Activated CD4-positive, alpha-beta T cell treated with anti-CD3 and anti-CD28 coated beads, Interleukin-2, amount 10 ng/mL, durations not matched to agents 24 days and 14 days (primary cell): ENCODE measurements at regions of chr3 and their contacts with region 1.

Region 1: GRCh38 chr3:124639406-124640237 is 90.6 kb upstream of the UMPS start:
- DNase-seq: peak; percentile 78
- H3K4me3 Mint-ChIP-seq: peak overlapping the region; percentile 74
- H3K27ac Mint-ChIP-seq: peak overlapping the region; percentile 76
- H3K4me1 Mint-ChIP-seq: peaks cover 41% of the 10 kb centered on the region
- H3K27me3 Mint-ChIP-seq: peaks cover 43% of the 10 kb centered on the region

Region 2: GRCh38 chr3:124592621-124593441 is 46.8 kb before region 1 on chr3:
- intact Hi-C with region 1: loop called (anchors 1 kb)
- DNase-seq: no peak
- H3K4me3 Mint-ChIP-seq: no peak overlapping the region
- H3K27ac Mint-ChIP-seq: no peak overlapping the region
- H3K4me1 Mint-ChIP-seq: peaks cover 14% of the 10 kb centered on the region
- H3K27me3 Mint-ChIP-seq: peaks cover 35% of the 10 kb centered on the region

Region 3: DNA sequence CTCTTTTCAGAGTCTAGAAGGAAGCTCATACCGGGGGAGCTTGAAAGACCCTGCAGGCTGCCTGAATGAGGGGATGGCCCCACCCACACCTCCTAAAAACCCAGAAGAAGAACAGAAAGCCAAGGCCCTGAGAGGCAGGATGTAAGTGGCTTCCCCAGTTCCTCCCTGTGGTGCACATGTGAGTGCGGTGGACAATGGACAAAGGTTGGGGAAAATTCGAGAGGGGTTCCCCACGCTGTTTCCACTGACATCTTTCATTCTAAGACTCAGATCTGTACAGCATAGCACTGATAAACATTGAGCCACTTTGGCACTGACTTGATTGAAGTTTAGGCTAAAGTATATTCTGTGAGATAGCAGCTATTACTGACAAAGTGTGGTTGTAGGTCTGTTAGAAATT is 11.2 kb after region 1 on chr3:
- intact Hi-C with region 1: loop called (anchors 1 kb)
- DNase-seq: peak; percentile 65
- H3K4me3 Mint-ChIP-seq: peak overlapping the region; percentile 6
- H3K27ac Mint-ChIP-seq: peak overlapping the region; percentile 76
- H3K4me1 Mint-ChIP-seq: peaks cover 13% of the 10 kb centered on the region
- H3K27me3 Mint-ChIP-seq: peaks cover 38% of the 10 kb centered on the region